Heart left ventricle (tissue), 16 donors: ENCODE measurements at regions of chr12 and their contacts with region 1.

Region 1: DNA sequence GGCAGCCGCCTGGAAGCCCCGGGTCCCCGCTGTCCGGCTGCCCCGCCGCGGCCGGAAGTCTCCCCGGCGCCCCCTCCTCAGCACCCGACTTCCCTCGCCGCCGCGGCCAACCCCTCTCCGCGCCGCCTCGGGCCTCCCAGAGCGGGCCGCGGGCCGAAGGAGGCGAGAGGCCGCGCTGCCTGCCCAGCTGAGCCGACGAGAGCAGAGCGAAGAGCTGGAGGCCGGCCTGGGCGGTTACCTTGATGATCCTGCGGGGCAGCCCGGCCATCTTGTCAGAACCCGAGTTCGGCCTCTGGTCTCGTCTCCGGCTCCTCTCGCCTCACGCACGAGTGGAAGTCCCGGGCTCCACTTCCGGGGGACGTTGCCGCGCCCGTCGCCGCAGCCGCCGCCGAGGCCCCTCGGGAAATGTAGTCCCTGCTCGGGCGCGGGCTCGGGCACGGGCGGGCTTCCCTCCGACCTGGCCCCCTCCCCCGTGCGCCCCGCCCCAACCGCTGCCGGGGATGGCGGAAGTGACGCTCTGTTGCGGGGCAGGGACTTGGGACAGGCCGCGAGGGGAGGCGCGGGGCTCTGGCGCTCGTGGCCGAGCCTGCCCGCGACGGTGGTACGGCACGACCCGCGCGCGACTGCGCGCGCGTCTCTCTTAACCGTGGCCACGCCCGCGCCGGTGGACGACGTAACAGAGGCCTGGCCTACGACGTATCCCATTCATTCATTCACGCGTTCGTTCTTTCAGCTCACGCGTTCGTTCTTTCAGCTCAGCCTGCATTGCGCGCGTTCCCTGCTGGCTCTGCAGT is at the start of gene UBE2N:
- DNase-seq: peak; percentile 97 to 98 (median 98)
- ATAC-seq: peak; percentile 89 to 97 (median 96)
- H3K4me3 ChIP-seq: peak within 1 kb of the TSS; percentile 68 to 100 (median 94)
- H3K27ac ChIP-seq: peak within 1 kb of the TSS; percentile 51 to 96 (median 92)
- H3K4me1 ChIP-seq: peaks cover 7 to 51% (median 40%) of the 10 kb centered on the region in 12 donors
- H3K27me3 ChIP-seq: no peaks in the 10 kb centered on the region
- CTCF ChIP-seq: no peak
- POLR2A ChIP-seq: peak in 1 of 2 donors; percentile 80
- total RNA-seq, gene UBE2N: 53.6 to 107 (median 88.1) TPM

Region 2: DNA sequence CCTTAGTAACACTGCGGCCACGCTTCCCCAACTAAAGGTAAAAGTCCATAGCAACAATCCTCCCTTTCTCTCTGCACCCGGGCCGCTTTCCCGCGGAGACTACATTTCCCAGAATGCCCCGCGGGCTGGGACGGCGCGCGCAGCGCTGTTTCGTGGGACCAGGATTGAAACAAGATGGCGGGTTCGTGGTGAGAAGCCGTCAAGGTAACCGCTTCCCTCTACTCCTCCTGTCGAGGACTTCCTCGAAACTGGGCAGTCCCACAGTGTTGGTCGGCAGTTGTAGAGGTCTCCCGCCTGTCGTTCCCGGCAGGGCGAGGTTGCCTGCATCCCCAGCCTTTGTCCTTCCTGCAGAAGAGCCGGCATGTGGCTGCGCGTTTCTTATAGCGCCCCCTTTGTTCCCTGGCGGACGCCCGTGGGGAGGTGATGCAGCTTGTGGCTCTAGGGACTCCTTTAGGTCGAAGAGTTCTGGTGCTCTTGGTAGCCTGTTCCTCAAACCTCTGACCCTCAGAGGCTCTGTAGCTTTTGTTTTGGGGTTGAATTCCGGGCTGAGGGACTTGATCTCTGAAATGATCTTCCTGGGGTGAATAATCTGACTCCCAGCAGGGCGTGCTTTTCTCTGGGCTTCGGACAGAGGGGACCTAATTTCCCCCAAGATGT is 25.7 kb after region 1 on chr12 and contains the start of gene MRPL42:
- intact Hi-C with region 1: loop called in 1 of 10 experiments (anchors 1 kb)
- DNase-seq: peak; percentile 89 to 96 (median 91)
- ATAC-seq: peak; percentile 92 to 98 (median 96)
- H3K4me3 ChIP-seq: peak within 1 kb of the TSS; percentile 58 to 93 (median 80)
- H3K27ac ChIP-seq: peak within 1 kb of the TSS; percentile 75 to 96 (median 90)
- H3K4me1 ChIP-seq: peaks cover 0 to 33% (median 23%) of the 10 kb centered on the region in 12 donors
- H3K27me3 ChIP-seq: no peaks in the 10 kb centered on the region
- CTCF ChIP-seq: peak; percentile 55 to 97 (median 77)
- POLR2A ChIP-seq: peak in 1 of 2 donors; percentile 64
- total RNA-seq, gene MRPL42: 31.2 to 53.0 (median 46.7) TPM

Region 3: GRCh38 chr12:93624595-93625294 is 182.9 kb after region 1 on chr12:
- intact Hi-C with region 1: no loop called
- DNase-seq: no peak
- ATAC-seq: peak in 1 of 4 donors; percentile 58
- H3K4me3 ChIP-seq: no peak overlapping the region
- H3K27ac ChIP-seq: peak overlapping the region in 1 of 12 donors; percentile 38
- H3K4me1 ChIP-seq: peaks cover 0 to 9% (median 0%) of the 10 kb centered on the region in 12 donors
- H3K27me3 ChIP-seq: no peaks in the 10 kb centered on the region
- CTCF ChIP-seq: no peak
- POLR2A ChIP-seq: no peak